Naive thymus-derived CD4-positive, alpha-beta T cell (primary cell): ENCODE measurements at regions of chr4 and their contacts with region 1.

Region 1: GRCh38 chr4:53804719-53805118 is 213.4 kb upstream of the LNX1 start:
- DNase-seq: peak in 2 of 9 donors; percentile 2 to 22
- ATAC-seq: peak; percentile 26
- H3K4me3 ChIP-seq: no peak overlapping the region
- H3K4me3 Mint-ChIP-seq: no peak overlapping the region
- H3K27ac ChIP-seq: no peak overlapping the region
- H3K27ac Mint-ChIP-seq: no peak overlapping the region
- H3K4me1 ChIP-seq: no peaks in the 10 kb centered on the region
- H3K4me1 Mint-ChIP-seq: no peaks in the 10 kb centered on the region
- H3K27me3 ChIP-seq: no peaks in the 10 kb centered on the region
- H3K27me3 Mint-ChIP-seq: peaks cover 0 to 22% (median 4%) of the 10 kb centered on the region in 5 donors

Region 2: GRCh38 chr4:52081216-52081615 is 1723.5 kb before region 1 on chr4:
- CTCF ChIA-PET with region 1: no interaction called
- POLR2A ChIA-PET with region 1: no interaction called
- intact Hi-C with region 1: loop called in 1 of 2 experiments (anchors 10 kb)
- DNase-seq: no peak
- ATAC-seq: no peak
- H3K4me3 ChIP-seq: no peak overlapping the region
- H3K4me3 Mint-ChIP-seq: no peak overlapping the region
- H3K27ac ChIP-seq: no peak overlapping the region
- H3K27ac Mint-ChIP-seq: no peak overlapping the region
- H3K4me1 ChIP-seq: no peaks in the 10 kb centered on the region
- H3K4me1 Mint-ChIP-seq: no peaks in the 10 kb centered on the region
- H3K27me3 ChIP-seq: no peaks in the 10 kb centered on the region
- H3K27me3 Mint-ChIP-seq: peaks cover 20 to 55% (median 34%) of the 10 kb centered on the region in 5 donors

Region 3: DNA sequence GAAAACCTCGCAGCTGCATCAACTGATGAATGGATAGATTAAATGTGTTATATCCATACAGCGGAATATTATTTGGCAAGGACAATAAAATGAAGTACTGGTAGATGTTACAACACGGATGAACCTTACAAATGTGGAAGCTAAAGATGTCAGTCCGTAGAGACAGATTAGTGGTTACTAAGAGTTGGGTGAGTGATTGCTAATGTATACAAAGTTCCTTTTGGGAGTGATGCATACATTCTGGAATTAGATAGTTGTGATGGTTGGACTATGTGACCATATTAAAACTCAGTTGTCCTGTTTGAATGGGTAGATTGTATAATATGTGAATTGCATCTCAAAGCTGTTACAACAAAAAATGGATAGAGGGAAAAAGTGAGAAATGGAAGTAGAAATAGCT is 424.5 kb before region 1 on chr4:
- CTCF ChIA-PET with region 1: no interaction called
- POLR2A ChIA-PET with region 1: no interaction called
- intact Hi-C with region 1: no loop called
- DNase-seq: no peak
- ATAC-seq: no peak
- H3K4me3 ChIP-seq: no peak overlapping the region
- H3K4me3 Mint-ChIP-seq: peak overlapping the region; percentile 25 to 99 (median 60)
- H3K27ac ChIP-seq: no peak overlapping the region
- H3K27ac Mint-ChIP-seq: peak overlapping the region in 1 of 9 donors; percentile 57
- H3K4me1 ChIP-seq: peaks cover 17 to 21% of the 10 kb centered on the region in 2 donors
- H3K4me1 Mint-ChIP-seq: peaks cover 22 to 58% (median 43%) of the 10 kb centered on the region in 7 donors
- H3K27me3 ChIP-seq: no peaks in the 10 kb centered on the region
- H3K27me3 Mint-ChIP-seq: peaks cover 0 to 4% (median 0%) of the 10 kb centered on the region in 5 donors